ENCODE measurements at regions of chr12 and their contacts with region 1.

Region 1: DNA sequence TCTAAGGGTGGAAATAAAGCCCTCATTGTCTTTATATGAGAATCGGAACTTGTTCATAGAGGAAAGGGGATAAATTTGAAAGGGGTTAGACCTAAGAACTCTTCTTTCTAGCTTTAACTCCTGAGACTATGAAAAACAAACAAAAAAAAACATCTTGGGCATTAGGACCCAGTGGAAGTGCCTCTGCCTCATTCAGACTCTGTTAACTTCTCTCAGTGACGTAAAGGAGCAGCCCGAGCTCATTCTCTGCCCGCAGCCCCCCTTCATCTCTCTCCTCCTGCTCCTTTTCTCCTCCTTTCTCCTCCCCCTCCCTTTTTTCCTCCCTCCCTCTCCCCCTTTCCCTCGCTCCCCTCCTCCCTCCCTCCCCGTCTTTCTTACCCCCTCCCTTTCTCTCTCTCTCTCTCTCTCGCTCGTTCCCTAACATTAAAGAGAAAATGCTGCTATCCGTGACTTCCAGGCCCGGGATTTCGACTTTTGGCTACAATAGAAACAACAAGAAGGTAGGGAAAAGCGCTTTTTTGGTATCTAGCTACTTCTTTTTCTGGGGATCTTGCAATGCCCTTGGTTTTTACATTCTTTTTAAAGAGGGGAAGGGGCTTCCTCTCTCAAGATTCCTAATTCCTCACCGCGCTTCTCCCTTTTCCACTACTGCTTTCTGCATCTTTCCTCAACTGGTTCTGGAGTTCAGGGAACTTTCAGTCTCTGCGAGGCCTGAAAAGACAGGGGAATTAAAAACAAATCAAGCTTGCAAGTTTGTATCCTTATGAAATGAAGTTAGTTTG is at the start of gene RBMS2:
- DNase-seq: peak; percentile 97

Region 2: GRCh38 chr12:56071648-56072047 is 450.1 kb before region 1 on chr12:
- in situ Hi-C with region 1: no loop called
- DNase-seq: no peak

Region 3: GRCh38 chr12:56571126-56571525 is 49.3 kb after region 1 on chr12:
- in situ Hi-C with region 1: loop called (anchors 5 kb)
- DNase-seq: no peak

Region 4: GRCh38 chr12:56614627-56615026 is 92.8 kb after region 1 on chr12:
- in situ Hi-C with region 1: loop called (anchors 5 kb)
- DNase-seq: no peak

Measured in ACHN (cell line).